ENCODE measurements at regions of chr17 and their contacts with region 1.

Region 1: DNA sequence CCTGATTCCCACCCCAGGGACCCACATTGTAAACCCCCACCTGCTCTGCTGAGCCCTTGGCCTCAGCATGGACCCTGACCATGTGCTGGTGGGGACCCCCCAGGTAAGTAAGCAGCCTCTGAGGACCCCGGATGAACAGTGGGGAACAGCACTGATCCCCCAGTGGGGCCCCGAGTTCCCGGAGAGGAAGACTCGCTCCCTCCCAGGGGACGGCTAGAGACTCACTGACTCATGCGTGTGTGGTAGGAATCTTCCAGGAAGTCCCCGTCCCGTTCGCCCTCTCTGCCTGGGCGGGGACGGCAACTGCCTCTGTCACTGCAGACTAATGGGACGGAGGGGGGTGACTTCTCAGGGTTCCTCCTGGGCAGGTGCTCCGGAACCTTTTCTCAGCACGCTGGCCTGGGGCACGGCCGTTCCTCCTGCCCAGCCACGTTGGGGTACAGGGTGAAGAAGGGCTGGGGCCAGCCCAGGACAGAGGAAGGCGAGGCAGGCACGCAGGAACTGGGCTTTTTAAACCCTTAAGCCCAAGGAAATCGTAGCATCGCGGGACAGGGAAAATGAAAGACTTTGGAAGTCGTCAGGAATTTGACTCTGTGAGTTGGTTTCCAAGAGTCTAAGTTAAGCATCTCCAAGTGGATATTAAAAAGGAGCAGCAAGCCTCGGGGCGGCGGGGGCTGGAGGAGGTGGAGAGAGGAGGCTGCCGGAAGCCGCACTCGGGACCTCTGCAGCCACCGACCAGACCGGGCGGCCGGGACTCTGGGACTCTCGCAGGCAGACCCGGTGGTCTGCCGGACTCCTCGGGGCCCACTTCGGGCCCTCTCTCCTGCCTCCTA is 178.7 kb downstream of the SEC14L1 start:
- DNase-seq: peak; percentile 96
- H3K4me3 ChIP-seq: peak overlapping the region; percentile 30 to 51 (median 47)
- H3K27ac ChIP-seq: peak overlapping the region; percentile 91 to 92 (median 92)
- H3K4me1 ChIP-seq: peaks cover 0 to 85% (median 75%) of the 10 kb centered on the region in 4 donors
- H3K27me3 ChIP-seq: no peaks in the 10 kb centered on the region
- CTCF ChIP-seq: no peak
- EP300 ChIP-seq: peak in 2 of 4 donors; percentile 27 to 31
- POLR2A ChIP-seq: peak; percentile 65 to 77

Region 2: DNA sequence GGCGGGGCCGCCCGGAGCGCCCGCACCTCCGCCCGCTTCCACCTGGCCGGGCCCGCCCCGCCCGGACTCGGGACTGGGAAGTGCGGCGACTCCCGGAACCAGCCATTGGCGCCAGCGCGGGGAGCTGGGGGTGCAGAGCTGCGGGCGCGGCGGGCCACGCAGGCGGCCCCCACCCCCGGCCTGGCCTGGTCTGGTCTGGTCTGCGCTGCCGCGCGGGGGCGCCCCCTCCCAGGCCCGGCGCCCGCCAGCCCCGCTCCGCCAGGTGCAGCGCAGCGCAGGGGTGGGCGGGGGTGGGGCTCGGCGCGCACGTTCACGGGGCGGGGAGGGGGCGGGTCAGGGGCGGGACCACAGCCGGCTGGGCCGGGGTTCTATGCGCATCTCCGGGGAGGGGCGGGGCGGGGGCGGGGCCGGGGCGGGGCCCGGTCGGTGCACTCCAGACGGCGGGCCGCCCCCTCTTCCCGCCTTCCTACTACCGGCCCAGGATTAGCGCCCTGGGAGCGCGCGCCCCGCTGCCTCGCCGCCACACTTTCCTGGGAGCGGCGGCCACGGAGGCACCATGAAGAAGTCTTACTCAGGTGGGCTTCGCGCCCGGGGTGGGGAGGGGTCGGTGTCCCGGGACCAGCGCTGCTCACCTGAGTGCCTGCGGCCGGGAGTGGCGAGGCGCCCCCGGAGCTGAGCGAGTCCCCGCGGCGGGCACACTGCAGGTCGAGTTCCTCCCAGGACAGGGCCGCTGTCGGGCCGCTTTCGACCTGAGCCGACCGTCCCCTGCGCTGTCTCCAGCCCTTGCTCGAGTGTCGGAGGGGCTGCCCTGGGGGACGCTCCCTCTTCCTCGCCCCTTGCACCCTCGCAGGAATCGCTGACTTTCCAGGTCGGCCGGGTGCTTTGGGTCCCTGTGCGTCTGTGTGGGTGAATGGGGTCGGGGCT is 38.2 kb before region 1 on chr17:
- intact Hi-C with region 1: loop called (anchors 5 kb)
- DNase-seq: peak; percentile 76
- H3K4me3 ChIP-seq: peak overlapping the region; percentile 38 to 58 (median 52)
- H3K27ac ChIP-seq: peak overlapping the region in 3 of 4 donors; percentile 12 to 87 (median 46)
- H3K4me1 ChIP-seq: peaks cover 0 to 40% (median 26%) of the 10 kb centered on the region in 4 donors
- H3K27me3 ChIP-seq: no peaks in the 10 kb centered on the region
- CTCF ChIP-seq: peak in 1 of 4 experiments; percentile 15
- EP300 ChIP-seq: no peak
- POLR2A ChIP-seq: peak in 1 of 2 donors; percentile 39

Region 3: DNA sequence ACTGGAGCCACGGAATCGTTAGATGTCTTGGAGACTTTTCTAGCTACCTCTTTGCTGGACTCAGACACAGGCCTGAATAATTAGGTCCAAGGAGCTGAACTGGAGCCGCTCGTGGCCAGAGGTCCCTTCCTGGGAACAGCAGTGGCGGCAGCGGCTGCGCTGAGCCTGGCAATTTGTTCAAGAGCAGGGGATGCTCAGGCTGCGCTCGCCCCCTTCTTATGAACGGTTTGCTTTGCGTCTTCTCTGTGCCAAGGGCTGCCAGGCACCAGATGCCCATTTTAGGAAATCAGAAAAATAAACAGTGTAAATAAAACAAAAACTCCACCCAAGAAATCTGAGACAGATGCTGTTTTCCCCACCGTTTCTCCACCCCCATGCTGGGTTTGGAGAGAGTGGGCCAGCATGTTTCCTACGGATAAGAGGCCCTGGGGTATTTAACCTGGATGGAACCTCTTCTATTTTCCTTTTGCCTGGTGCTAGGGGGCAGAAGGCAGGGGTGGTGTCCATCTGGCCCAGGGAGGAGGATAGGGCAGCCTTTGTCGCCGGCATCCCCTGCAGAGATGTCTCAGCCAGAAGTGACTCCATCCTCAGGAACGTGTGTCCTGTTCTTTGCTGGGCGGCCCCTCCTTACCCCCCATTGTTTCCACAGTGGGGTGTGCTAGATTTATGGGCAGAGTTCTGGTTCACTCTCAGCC is 15.2 kb before region 1 on chr17:
- intact Hi-C with region 1: no loop called
- DNase-seq: no peak
- H3K4me3 ChIP-seq: no peak overlapping the region
- H3K27ac ChIP-seq: peak overlapping the region in 2 of 4 donors; percentile 26 to 43
- H3K4me1 ChIP-seq: peaks cover 0 to 28% (median 20%) of the 10 kb centered on the region in 4 donors
- H3K27me3 ChIP-seq: no peaks in the 10 kb centered on the region
- CTCF ChIP-seq: no peak
- EP300 ChIP-seq: no peak
- POLR2A ChIP-seq: no peak

Measured in sigmoid colon (tissue), 7 donors.